Panc1 (cell line): ENCODE measurements at regions of chr9 and their contacts with region 1.

Region 1: DNA sequence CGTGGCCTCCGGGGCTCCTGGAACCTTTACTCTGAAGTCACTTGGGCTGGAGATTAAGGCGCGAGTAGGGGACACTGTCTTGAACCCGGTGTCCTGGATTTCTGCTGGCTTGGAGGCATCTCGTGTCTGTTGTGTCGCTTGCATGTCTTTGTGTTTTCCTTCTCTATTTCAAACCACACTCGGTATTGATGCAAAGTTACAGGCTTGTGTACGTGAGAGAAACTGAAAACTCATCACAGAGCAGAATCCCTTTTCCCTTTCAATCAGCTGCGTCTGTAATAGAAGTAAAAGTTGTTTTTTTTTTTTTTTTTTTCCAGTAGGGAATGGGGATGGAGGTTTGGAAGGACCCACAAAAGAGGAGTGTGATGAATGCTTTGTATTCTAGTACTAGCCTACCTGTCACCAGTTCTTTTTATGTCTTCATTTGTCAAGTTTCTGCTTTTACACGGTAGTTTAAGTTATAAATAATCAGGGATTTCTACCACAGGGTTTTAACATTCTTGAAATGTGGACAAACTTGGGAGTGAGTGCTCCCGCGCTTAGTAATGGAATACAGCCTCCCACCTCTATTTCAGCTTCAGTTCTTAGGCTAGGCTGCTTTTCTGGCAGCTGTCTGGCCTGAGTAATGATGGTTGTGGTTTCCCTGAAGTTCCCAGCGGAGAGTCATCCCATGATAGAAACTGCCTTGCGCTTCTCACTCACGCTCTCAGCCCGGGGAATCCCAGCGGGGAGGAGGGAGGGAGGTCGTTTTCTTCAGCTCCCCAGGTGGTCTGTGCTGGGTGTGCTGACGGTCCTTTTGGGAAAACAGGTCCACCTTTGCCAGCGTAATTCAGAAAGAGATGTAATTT is 763 bp downstream of the TJP2 start:
- DNase-seq: no peak
- ATAC-seq: peak; percentile 52
- H3K4me3 ChIP-seq: peak overlapping the region; percentile 78 to 81
- H3K27ac ChIP-seq: peak overlapping the region; percentile 76
- H3K4me1 ChIP-seq: peaks cover 48% of the 10 kb centered on the region
- H3K27me3 ChIP-seq: no peaks in the 10 kb centered on the region
- CTCF ChIP-seq: no peak

Region 2: GRCh38 chr9:69085569-69086283 is 89.1 kb before region 1 on chr9:
- CTCF ChIA-PET with region 1: no interaction called
- POLR2A ChIA-PET with region 1: no interaction called
- in situ Hi-C with region 1: no loop called
- intact Hi-C with region 1: loop called (anchors 10 kb)
- DNase-seq: no peak
- ATAC-seq: no peak
- H3K4me3 ChIP-seq: no peak overlapping the region
- H3K27ac ChIP-seq: no peak overlapping the region
- H3K4me1 ChIP-seq: no peaks in the 10 kb centered on the region
- H3K27me3 ChIP-seq: no peaks in the 10 kb centered on the region
- CTCF ChIP-seq: no peak

Region 3: GRCh38 chr9:69121828-69122548 is 52.9 kb before region 1 on chr9:
- CTCF ChIA-PET with region 1: no interaction called
- POLR2A ChIA-PET with region 1: no interaction called
- in situ Hi-C with region 1: no loop called
- intact Hi-C with region 1: loop called (anchors 5 kb)
- DNase-seq: no peak
- ATAC-seq: peak; percentile 76
- H3K4me3 ChIP-seq: peak overlapping the region; percentile 71 to 87
- H3K27ac ChIP-seq: peak overlapping the region; percentile 74
- H3K4me1 ChIP-seq: peaks cover 3% of the 10 kb centered on the region; the same call in 1 of the 2 replicates
- H3K27me3 ChIP-seq: no peaks in the 10 kb centered on the region
- CTCF ChIP-seq: no peak

Region 4: GRCh38 chr9:69199769-69200470 is 25.1 kb after region 1 on chr9:
- CTCF ChIA-PET with region 1: no interaction called
- POLR2A ChIA-PET with region 1: no interaction called
- in situ Hi-C with region 1: no loop called
- intact Hi-C with region 1: no loop called
- DNase-seq: no peak
- ATAC-seq: no peak
- H3K4me3 ChIP-seq: no peak overlapping the region
- H3K27ac ChIP-seq: no peak overlapping the region
- H3K4me1 ChIP-seq: no peaks in the 10 kb centered on the region
- H3K27me3 ChIP-seq: no peaks in the 10 kb centered on the region
- CTCF ChIP-seq: no peak

Region 5: GRCh38 chr9:69223605-69224004 is 48.8 kb after region 1 on chr9:
- CTCF ChIA-PET with region 1: no interaction called
- POLR2A ChIA-PET with region 1: no interaction called
- in situ Hi-C with region 1: no loop called
- intact Hi-C with region 1: loop called (anchors 10 kb)
- DNase-seq: peak; percentile 8
- ATAC-seq: peak; percentile 94
- H3K4me3 ChIP-seq: no peak overlapping the region
- H3K27ac ChIP-seq: no peak overlapping the region
- H3K4me1 ChIP-seq: no peaks in the 10 kb centered on the region
- H3K27me3 ChIP-seq: no peaks in the 10 kb centered on the region
- CTCF ChIP-seq: peak; percentile 83